PC-9 (cell line): ENCODE measurements at regions of chr7 and their contacts with region 1.

Region 1: DNA sequence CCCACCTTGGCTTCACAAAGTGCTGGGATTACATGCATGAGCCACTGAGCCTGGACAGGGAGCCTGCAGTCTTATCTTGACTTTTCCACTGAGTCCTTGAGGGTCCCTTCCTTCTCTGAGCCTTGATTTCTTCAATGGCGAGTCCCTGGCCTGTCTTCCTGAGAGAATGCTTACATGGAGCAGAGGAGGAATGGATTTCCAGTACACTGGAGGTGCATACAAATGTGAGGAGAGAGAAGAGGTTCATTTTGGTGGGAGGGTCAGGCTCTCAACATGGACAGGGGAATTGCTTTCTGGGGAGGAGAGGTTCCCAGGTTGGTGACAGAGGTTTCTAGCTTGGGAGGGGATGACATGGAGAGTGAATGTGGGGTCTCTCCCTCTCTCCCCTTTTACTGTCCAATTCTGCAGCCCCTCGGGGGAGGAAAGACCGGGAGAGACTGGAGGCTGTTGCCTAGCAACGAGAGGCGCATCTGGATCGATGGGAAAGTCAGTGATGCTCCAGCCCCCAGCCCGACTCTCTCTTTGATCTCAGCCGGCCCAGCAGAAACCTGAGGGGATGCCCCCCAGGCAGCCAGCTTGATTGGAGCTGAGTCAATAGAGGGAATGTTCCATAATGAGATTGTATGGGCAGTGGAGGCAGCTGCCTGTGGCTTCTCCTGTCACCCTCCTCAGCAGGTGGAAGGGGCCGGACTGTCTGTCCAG is 14.8 kb downstream of the SRRM3 start:
- DNase-seq: no peak
- H3K4me3 ChIP-seq: no peak overlapping the region
- H3K27ac ChIP-seq: no peak overlapping the region
- H3K4me1 ChIP-seq: no peaks in the 10 kb centered on the region
- H3K27me3 ChIP-seq: peaks cover 71% of the 10 kb centered on the region
- CTCF ChIP-seq: no peak

Region 2: GRCh38 chr7:76254781-76255180 is 38.2 kb after region 1 on chr7:
- CTCF ChIA-PET with region 1: interaction called, 12 read pairs
- POLR2A ChIA-PET with region 1: no interaction called
- intact Hi-C with region 1: no loop called
- DNase-seq: no peak
- H3K4me3 ChIP-seq: no peak overlapping the region
- H3K27ac ChIP-seq: no peak overlapping the region
- H3K4me1 ChIP-seq: no peaks in the 10 kb centered on the region
- H3K27me3 ChIP-seq: no peaks in the 10 kb centered on the region
- CTCF ChIP-seq: no peak